ENCODE measurements at regions of chr15 and their contacts with region 1.

Region 1: DNA sequence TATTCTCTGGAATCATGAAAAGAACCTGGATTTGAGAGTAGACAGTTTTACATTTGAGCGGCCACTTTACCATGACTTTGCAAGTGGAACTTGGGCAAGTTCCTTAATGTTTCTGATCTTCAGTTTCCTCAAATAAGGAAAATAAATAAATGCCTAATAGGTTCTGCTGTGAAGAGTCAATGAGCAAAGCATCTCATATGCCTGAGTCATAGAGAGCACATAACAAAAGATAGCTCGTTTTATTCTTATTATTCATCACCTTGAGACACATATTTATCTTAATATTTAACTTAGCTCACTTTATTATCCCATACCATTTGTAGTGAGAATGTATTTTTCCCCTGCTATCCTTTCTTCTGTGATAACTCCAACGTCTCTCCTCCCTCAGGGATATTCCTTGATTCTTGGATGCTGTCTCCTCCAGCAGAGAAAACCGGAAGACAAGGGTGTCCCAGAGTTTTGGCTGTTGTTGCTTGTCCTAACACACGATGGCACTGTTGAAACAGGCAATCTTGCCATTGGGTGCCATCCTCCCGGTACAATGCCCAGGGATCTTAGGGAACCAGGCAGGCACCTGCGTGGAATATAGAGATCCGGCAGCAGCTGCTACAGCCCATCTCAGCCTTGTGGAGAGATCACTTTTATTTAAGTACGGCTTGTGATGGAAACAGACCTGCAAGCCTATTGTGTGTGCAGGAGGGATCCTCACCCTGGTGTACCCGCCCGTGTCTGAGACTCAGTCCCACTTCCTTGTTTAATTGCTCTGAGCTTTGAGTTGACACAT is 33.3 kb upstream of the VPS33B start:
- DNase-seq: peak; percentile 86
- H3K4me3 Mint-ChIP-seq: no peak overlapping the region
- H3K27ac Mint-ChIP-seq: no peak overlapping the region
- H3K4me1 Mint-ChIP-seq: no peaks in the 10 kb centered on the region
- H3K27me3 Mint-ChIP-seq: peaks cover 59% of the 10 kb centered on the region
- CTCF ChIP-seq: peak; percentile 78

Region 2: GRCh38 chr15:90954712-90955671 is 100.7 kb before region 1 on chr15 and contains the start of gene RCCD1:
- CTCF ChIA-PET with region 1: interaction called, 105 read pairs
- POLR2A ChIA-PET with region 1: no interaction called
- intact Hi-C with region 1: no loop called
- DNase-seq: peak; percentile 97
- H3K4me3 Mint-ChIP-seq: peak within 1 kb of the TSS; percentile 77
- H3K27ac Mint-ChIP-seq: peak within 1 kb of the TSS; percentile 84
- H3K4me1 Mint-ChIP-seq: peaks cover 10% of the 10 kb centered on the region
- H3K27me3 Mint-ChIP-seq: no peaks in the 10 kb centered on the region
- CTCF ChIP-seq: no peak
- total RNA-seq, gene RCCD1: 21.5 and 29.0 TPM in 2 replicates

Region 3: GRCh38 chr15:91142114-91142731 is 86.5 kb after region 1 on chr15:
- CTCF ChIA-PET with region 1: interaction called, 11 read pairs
- POLR2A ChIA-PET with region 1: no interaction called
- intact Hi-C with region 1: loop called (anchors 1 kb)
- DNase-seq: peak; percentile 26
- H3K4me3 Mint-ChIP-seq: no peak overlapping the region
- H3K27ac Mint-ChIP-seq: no peak overlapping the region
- H3K4me1 Mint-ChIP-seq: no peaks in the 10 kb centered on the region
- H3K27me3 Mint-ChIP-seq: peaks cover 32% of the 10 kb centered on the region
- CTCF ChIP-seq: peak; percentile 38

Region 4: GRCh38 chr15:91224755-91225380 is 169.1 kb after region 1 on chr15:
- CTCF ChIA-PET with region 1: interaction called, 109 read pairs
- POLR2A ChIA-PET with region 1: interaction called, 4 read pairs
- intact Hi-C with region 1: loop called (anchors 1 kb)
- DNase-seq: peak; percentile 68
- H3K4me3 Mint-ChIP-seq: no peak overlapping the region
- H3K27ac Mint-ChIP-seq: no peak overlapping the region
- H3K4me1 Mint-ChIP-seq: no peaks in the 10 kb centered on the region
- H3K27me3 Mint-ChIP-seq: peaks cover 62% of the 10 kb centered on the region
- CTCF ChIP-seq: peak; percentile 60

Region 5: GRCh38 chr15:91246998-91247397 is 191.3 kb after region 1 on chr15:
- CTCF ChIA-PET with region 1: interaction called, 15 read pairs
- POLR2A ChIA-PET with region 1: no interaction called
- intact Hi-C with region 1: no loop called
- DNase-seq: no peak
- H3K4me3 Mint-ChIP-seq: no peak overlapping the region
- H3K27ac Mint-ChIP-seq: no peak overlapping the region
- H3K4me1 Mint-ChIP-seq: no peaks in the 10 kb centered on the region
- H3K27me3 Mint-ChIP-seq: peaks cover 31% of the 10 kb centered on the region
- CTCF ChIP-seq: no peak

Region 6: GRCh38 chr15:91263996-91264531 is 208.3 kb after region 1 on chr15:
- CTCF ChIA-PET with region 1: interaction called, 35 read pairs
- POLR2A ChIA-PET with region 1: interaction called, 4 read pairs
- intact Hi-C with region 1: no loop called
- DNase-seq: peak; percentile 40
- H3K4me3 Mint-ChIP-seq: no peak overlapping the region
- H3K27ac Mint-ChIP-seq: no peak overlapping the region
- H3K4me1 Mint-ChIP-seq: no peaks in the 10 kb centered on the region
- H3K27me3 Mint-ChIP-seq: no peaks in the 10 kb centered on the region
- CTCF ChIP-seq: no peak

Region 7: DNA sequence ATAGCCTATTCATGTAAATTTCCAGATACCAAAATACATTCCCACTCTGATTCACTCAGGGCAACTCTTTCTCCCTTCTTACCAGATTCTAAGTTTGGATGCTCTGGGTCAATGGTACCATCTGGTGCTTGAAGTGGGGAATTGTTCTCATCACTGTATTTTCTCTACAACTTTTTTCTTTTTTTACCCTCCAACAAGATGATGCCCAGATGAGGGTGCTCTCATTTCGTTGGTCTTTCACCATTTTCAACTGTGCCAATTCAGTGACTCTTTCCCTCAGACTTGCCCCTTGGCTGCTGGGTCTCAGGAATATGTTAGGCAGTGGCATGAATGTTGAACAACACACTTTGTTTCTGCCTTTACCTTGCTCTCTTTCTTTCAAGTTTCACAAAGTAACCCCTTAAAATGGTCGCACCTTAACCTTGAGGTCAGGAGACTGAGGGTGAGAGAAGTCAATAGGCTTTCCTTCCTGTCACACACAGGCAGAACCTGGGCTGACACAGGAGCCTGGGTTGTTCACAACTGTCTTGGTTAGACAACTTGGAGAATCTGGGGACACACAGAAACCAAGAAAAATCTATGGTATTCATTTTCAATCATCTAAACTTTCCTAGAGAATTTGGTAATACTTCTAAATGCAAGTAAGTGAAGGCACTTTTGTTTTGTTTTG is 467.1 kb after region 1 on chr15:
- CTCF ChIA-PET with region 1: no interaction called
- POLR2A ChIA-PET with region 1: no interaction called
- intact Hi-C with region 1: loop called (anchors 2 kb)
- DNase-seq: peak; percentile 56
- H3K4me3 Mint-ChIP-seq: no peak overlapping the region
- H3K27ac Mint-ChIP-seq: no peak overlapping the region
- H3K4me1 Mint-ChIP-seq: peaks cover 13% of the 10 kb centered on the region
- H3K27me3 Mint-ChIP-seq: no peaks in the 10 kb centered on the region
- CTCF ChIP-seq: peak; percentile 43